GM23248 (cell line): ENCODE measurements at regions of chr18 and their contacts with region 1.

Region 1: GRCh38 chr18:49250816-49251388 is 209.5 kb downstream of the DYM start:
- DNase-seq: peak; percentile 40
- H3K4me3 ChIP-seq: no peak overlapping the region
- H3K27ac ChIP-seq: no peak overlapping the region
- H3K4me1 ChIP-seq: peaks cover 27% of the 10 kb centered on the region
- H3K27me3 ChIP-seq: no peaks in the 10 kb centered on the region

Region 2: DNA sequence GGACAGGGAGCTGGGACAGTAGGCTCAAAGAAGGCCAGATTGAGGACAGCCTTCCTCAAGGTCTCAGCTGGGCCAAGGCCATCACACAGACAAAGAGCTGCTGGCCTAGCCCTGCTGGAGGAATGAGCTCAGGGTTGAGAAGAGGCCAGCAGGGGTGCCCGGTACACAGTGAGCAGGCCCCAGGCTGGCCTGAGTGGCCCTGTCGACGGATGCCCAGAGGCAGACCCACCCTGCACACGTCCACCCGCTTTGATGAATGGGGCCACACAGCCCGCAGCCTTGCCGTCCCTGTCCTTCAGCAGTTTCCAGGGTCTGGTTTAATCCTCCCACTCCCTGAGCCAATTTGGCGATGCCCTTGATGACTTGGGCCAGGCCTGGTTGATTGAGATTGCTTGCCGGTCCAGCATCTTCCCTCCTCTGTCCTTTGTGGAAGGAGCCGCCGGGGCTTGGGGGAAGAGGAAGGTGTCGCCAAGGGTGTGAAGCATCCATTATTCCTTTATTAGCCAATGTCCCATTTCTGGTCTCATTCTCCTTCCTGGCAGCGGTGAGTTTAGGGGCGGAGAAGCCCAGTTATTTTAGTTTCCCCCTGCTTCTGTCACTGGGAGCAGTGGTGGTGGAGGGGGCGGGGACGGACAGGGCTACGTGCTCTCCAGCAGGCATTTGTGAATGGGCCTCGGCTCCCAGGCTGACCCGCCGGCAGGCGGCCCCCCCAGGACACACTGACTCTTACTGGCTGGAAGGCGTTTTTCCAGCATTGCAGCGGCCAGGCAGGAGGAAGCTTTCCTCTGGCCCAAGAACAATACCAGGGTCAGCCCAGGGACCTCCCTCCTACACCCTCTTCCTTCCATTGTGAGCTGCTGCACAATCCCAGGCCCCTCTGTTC is 570.3 kb before region 1 on chr18:
- in situ Hi-C with region 1: loop called (anchors 10 kb)
- DNase-seq: no peak
- H3K4me3 ChIP-seq: no peak overlapping the region
- H3K27ac ChIP-seq: no peak overlapping the region
- H3K4me1 ChIP-seq: peaks cover 10% of the 10 kb centered on the region
- H3K27me3 ChIP-seq: no peaks in the 10 kb centered on the region

Region 3: DNA sequence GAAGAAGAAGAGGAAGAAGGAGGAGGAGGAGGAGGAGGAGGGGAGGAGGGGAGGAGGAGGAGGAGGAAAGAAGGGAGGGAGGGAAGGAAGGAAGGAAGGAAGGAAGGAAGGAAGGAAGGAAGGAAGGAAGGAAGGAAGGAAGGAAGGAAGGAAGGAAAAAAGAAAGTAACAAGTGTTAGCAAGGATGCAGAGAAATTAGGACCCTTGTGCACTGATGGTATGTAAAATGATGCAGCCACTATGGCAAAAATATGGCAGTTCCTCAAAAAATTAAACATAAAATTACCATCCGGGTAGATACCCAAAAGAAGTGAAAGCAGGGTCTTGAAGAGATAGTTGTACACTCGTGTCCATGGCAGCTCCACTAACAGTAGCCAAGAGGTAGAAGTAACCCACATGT is 142.1 kb after region 1 on chr18:
- in situ Hi-C with region 1: no loop called
- DNase-seq: no peak
- H3K4me3 ChIP-seq: no peak overlapping the region
- H3K27ac ChIP-seq: no peak overlapping the region
- H3K4me1 ChIP-seq: no peaks in the 10 kb centered on the region
- H3K27me3 ChIP-seq: no peaks in the 10 kb centered on the region

Region 4: GRCh38 chr18:49412679-49413078 is 161.8 kb after region 1 on chr18:
- in situ Hi-C with region 1: loop called (anchors 10 kb)
- DNase-seq: no peak
- H3K4me3 ChIP-seq: no peak overlapping the region
- H3K27ac ChIP-seq: no peak overlapping the region
- H3K4me1 ChIP-seq: peaks cover 9% of the 10 kb centered on the region
- H3K27me3 ChIP-seq: no peaks in the 10 kb centered on the region

Region 5: GRCh38 chr18:49550621-49551339 is 299.9 kb after region 1 on chr18:
- in situ Hi-C with region 1: no loop called
- DNase-seq: no peak
- H3K4me3 ChIP-seq: no peak overlapping the region
- H3K27ac ChIP-seq: no peak overlapping the region
- H3K4me1 ChIP-seq: peaks cover 13% of the 10 kb centered on the region
- H3K27me3 ChIP-seq: peaks cover 27% of the 10 kb centered on the region